Gastrocnemius medialis (tissue), 4 donors: ENCODE measurements at regions of chr1 and their contacts with region 1.

Region 1: GRCh38 chr1:169546087-169546995 is 39.9 kb downstream of the F5 start:
- DNase-seq: peak; percentile 34 to 38
- ATAC-seq: peak; percentile 84 to 94
- H3K4me3 ChIP-seq: no peak overlapping the region
- H3K27ac ChIP-seq: no peak overlapping the region
- H3K4me1 ChIP-seq: no peaks in the 10 kb centered on the region
- H3K27me3 ChIP-seq: no peaks in the 10 kb centered on the region
- CTCF ChIP-seq: peak; percentile 77 to 85 (median 80)
- POLR2A ChIP-seq: no peak

Region 2: GRCh38 chr1:168504064-168504837 is 1042.1 kb before region 1 on chr1:
- in situ Hi-C with region 1: no loop called
- intact Hi-C with region 1: loop called (anchors 10 kb)
- DNase-seq: peak; percentile 18 to 62
- ATAC-seq: peak; percentile 58 to 80
- H3K4me3 ChIP-seq: no peak overlapping the region
- H3K27ac ChIP-seq: no peak overlapping the region
- H3K4me1 ChIP-seq: peaks cover 0 to 7% of the 10 kb centered on the region in 2 donors
- H3K27me3 ChIP-seq: no peaks in the 10 kb centered on the region
- CTCF ChIP-seq: no peak
- POLR2A ChIP-seq: no peak

Region 3: DNA sequence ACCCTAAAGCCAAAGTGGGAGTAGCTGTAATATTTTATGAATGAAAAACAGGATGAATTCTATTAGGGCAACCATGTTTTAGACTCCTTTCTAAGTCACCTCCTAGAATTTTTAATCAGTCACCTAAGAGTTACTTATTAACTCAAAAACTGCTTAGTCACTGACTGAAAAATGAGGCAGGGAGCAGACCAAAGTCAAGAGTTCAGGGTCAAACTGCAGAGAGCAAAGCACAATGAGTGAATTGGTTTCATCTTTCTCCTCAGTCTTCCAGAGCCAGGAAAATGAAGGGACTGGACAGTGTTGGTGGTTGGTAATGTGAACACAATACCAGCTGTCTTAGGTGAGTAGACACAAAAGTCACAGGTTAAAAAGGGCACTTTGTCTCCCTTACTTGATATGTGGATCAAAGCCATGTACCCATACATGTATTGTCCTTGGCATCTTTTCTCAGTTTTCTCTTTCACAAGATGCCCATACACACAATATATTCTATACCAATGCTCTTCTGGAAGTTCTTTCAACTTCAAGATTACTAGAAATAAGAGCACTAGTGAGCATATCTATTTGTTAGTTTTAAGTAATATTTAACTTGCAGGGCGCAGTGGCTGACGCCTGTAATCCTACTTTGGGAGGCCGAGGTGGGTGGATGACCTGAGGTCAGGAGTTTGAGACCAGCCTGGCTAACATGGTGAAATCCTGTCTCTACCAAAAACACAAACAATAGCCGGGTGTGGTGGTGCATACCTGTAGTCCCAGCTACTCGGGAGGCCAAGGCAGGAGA is 397.7 kb before region 1 on chr1:
- in situ Hi-C with region 1: no loop called
- intact Hi-C with region 1: no loop called
- DNase-seq: peak in 1 of 2 donors; percentile 26
- ATAC-seq: peak; percentile 68 to 89
- H3K4me3 ChIP-seq: no peak overlapping the region
- H3K27ac ChIP-seq: peak overlapping the region; percentile 42 to 77 (median 62)
- H3K4me1 ChIP-seq: peaks cover 14 to 21% of the 10 kb centered on the region in 2 donors
- H3K27me3 ChIP-seq: no peaks in the 10 kb centered on the region
- CTCF ChIP-seq: no peak
- POLR2A ChIP-seq: no peak

Region 4: GRCh38 chr1:169367486-169368405 is 178.6 kb before region 1 on chr1 and contains the starts of genes BLZF1 and NME7:
- in situ Hi-C with region 1: loop called in 3 of 4 experiments (anchors 5 to 10 kb)
- intact Hi-C with region 1: loop called (anchors 1 kb)
- DNase-seq: peak; percentile 93 to 94
- ATAC-seq: peak; percentile 99
- H3K4me3 ChIP-seq: peak within 1 kb of the TSS; percentile 66 to 90 (median 74)
- H3K27ac ChIP-seq: peak within 1 kb of the TSS; percentile 80 to 89 (median 86)
- H3K4me1 ChIP-seq: peaks cover 15 to 18% of the 10 kb centered on the region in 2 donors
- H3K27me3 ChIP-seq: no peaks in the 10 kb centered on the region
- CTCF ChIP-seq: no peak
- POLR2A ChIP-seq: peak; percentile 43
- total RNA-seq, gene BLZF1: 10.2 to 17.7 (median 14.6) TPM
- total RNA-seq, gene NME7: 3.7 to 8.4 (median 5.5) TPM

Region 5: GRCh38 chr1:169466259-169467230 is 79.8 kb before region 1 on chr1:
- in situ Hi-C with region 1: no loop called
- intact Hi-C with region 1: loop called (anchors 2 kb)
- DNase-seq: no peak
- ATAC-seq: no peak
- H3K4me3 ChIP-seq: no peak overlapping the region
- H3K27ac ChIP-seq: no peak overlapping the region
- H3K4me1 ChIP-seq: peaks cover 0 to 4% of the 10 kb centered on the region in 2 donors
- H3K27me3 ChIP-seq: no peaks in the 10 kb centered on the region
- CTCF ChIP-seq: peak in 3 of 5 experiments; percentile 15 to 31 (median 25)
- POLR2A ChIP-seq: no peak

Region 6: GRCh38 chr1:169809370-169810095 is 263.2 kb after region 1 on chr1:
- in situ Hi-C with region 1: loop called in 2 of 4 experiments (anchors 10 to 25 kb)
- intact Hi-C with region 1: loop called (anchors 2 kb)
- DNase-seq: no peak
- ATAC-seq: no peak
- H3K4me3 ChIP-seq: no peak overlapping the region
- H3K27ac ChIP-seq: no peak overlapping the region
- H3K4me1 ChIP-seq: no peaks in the 10 kb centered on the region
- H3K27me3 ChIP-seq: no peaks in the 10 kb centered on the region
- CTCF ChIP-seq: peak in 4 of 5 experiments; percentile 28 to 51 (median 35)
- POLR2A ChIP-seq: no peak